PC-3 (cell line): ENCODE measurements at regions of chr6 and their contacts with region 1.

Region 1: DNA sequence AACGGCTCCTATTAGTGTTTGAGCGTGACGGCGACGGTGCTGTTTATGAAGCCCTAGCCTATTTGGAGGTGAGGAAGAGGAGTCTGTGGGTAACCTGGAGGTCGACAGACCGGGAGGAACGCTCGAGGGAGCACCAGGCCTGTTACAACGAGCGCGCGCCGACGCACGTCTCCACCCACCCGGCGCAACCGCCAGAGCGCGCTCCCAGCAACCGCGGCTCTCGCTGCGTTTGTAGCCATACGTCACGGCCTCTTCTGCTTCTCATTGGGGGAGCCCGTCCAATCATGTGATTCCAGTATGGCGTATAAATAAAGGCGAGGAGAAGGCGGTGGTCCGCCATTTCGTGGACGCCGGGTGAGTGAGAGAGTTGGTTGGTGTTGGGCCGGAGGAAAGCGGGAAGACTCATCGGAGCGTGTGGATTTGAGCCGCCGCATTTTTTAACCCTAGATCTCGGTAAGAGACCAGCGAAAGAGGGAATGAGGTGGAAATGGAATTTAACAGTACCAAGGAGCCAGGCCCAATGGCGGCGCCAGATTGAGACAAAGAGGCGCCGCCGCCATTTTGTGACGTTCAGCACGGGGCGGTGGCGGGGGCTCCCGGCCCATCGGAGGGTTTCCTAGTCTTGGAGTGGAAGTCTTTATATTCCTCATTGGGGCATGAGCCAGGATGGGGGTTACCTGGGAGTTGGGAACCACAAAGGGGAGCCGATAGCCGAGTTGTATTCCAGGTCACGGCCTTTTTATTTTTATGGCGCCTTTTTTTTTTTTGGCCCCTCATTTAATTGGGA is at the start of gene SRSF3:
- DNase-seq: peak; percentile 98
- ATAC-seq: peak; percentile 92
- H3K4me3 ChIP-seq: peak within 1 kb of the TSS; percentile 88
- H3K27ac ChIP-seq: peak within 1 kb of the TSS; percentile 75
- H3K4me1 ChIP-seq: peaks cover 39% of the 10 kb centered on the region
- H3K27me3 ChIP-seq: no peaks in the 10 kb centered on the region
- CTCF ChIP-seq: no peak; the same call in 1 of the 2 replicates
- total RNA-seq, gene SRSF3: 206 and 297 TPM in 2 replicates

Region 2: DNA sequence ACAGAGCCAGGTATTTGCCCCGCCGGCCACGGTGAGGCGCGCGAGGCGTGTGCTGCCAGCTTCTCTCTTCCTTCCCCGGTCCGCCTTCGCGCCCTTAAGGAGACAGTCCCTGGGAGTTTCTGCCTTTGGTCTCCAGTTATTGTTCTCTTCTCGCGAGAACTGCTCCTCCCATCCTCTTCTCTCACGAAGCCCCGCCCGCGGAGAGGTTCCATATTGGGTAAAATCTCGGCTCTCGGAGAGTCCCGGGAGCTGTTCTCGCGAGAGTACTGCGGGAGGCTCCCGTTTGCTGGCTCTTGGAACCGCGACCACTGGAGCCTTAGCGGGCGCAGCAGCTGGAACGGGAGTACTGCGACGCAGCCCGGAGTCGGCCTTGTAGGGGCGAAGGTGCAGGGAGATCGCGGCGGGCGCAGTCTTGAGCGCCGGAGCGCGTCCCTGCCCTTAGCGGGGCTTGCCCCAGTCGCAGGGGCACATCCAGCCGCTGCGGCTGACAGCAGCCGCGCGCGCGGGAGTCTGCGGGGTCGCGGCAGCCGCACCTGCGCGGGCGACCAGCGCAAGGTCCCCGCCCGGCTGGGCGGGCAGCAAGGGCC is 566.6 kb before region 1 on chr6 and contains the start of gene MAPK14:
- CTCF ChIA-PET with region 1: no interaction called
- POLR2A ChIA-PET with region 1: no interaction called
- intact Hi-C with region 1: no loop called
- DNase-seq: peak; percentile 100
- ATAC-seq: peak; percentile 88
- H3K4me3 ChIP-seq: peak within 1 kb of the TSS; percentile 75
- H3K27ac ChIP-seq: peak within 1 kb of the TSS; percentile 52
- H3K4me1 ChIP-seq: peaks cover 15% of the 10 kb centered on the region; the same call in 1 of the 2 replicates
- H3K27me3 ChIP-seq: no peaks in the 10 kb centered on the region
- CTCF ChIP-seq: peak; percentile 85
- total RNA-seq, gene MAPK14: 53.7 and 56.8 TPM in 2 replicates

Region 3: DNA sequence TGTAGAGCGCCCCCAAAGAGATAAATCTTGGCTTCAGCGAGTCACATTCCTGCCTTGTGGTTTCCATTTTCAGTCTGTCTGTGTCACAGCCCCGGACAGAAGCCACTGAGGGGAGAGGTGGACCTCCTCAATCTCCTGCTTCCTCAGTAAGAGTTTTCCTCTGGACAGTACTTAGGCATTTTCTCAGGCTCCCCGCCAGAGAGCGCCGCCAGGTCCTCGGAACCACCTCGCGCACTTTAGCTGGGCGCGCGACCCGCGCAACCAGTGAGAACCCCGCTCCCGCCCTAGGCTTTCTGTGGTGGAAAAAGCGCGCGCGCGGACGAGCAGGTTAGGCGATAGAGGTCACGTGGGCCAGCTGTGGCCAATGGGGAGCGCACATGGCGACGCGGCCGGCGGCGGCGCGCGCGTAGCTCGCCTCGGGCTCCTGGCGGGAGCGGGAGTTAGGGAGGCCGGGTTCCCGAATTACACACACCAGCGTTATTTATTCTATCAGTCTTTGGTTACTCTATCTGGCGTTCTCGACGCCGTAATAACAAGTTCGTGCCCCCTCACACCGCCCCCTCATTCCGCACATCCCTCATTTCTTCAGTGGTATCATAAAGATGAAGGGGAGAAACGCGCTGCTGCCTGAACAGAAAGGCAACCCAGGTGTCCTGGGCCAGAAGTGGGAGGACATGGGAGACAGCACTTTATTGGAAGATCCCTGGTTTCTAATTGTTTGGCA is 171.0 kb before region 1 on chr6:
- CTCF ChIA-PET with region 1: no interaction called
- POLR2A ChIA-PET with region 1: no interaction called
- intact Hi-C with region 1: loop called (anchors 1 kb)
- DNase-seq: peak; percentile 99
- ATAC-seq: peak; percentile 87
- H3K4me3 ChIP-seq: peak overlapping the region; percentile 72
- H3K27ac ChIP-seq: peak overlapping the region; percentile 50
- H3K4me1 ChIP-seq: peaks cover 6% of the 10 kb centered on the region
- H3K27me3 ChIP-seq: no peaks in the 10 kb centered on the region
- CTCF ChIP-seq: peak; percentile 83

Region 4: DNA sequence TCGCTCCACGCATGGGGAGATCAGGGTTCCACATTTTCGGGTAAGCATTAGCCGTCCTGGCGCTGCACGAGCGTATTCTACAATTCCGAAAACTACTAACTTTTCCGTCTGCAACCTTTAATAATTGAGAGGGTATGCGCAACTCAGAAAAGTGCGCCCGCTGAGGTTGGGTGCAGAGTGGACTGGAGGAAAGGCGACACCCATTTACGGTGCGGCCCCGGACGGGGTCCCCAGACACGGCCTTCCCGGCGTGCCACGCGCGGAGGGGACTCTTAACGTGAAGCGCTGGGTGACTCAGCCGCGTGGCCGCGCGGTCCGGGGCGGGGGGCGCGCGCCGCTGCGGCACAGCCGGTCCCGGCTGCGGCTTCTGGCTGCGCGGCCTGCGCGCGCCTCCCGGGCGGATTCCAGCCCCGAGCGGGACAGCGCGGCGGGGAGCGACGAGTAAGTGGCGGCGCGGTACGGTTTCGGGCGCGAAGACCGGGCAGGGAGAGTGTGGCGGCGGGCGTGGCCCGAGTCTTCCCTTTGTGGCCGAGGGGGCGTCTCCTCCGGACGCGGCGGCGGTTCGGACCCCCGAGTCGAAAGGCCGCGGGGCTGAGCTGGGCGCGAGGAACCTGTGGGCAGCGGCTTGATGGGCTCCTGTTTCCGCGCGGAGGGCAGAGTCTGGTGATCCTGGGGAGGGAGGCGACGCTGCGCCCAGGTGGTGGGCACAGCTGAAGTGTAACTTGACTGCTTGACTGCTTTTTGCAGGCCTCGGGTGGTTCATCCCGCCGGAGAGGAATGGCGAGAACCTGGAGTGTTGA is 151.4 kb before region 1 on chr6 and contains the starts of genes KCTD20 and PXT1:
- CTCF ChIA-PET with region 1: no interaction called
- POLR2A ChIA-PET with region 1: no interaction called
- intact Hi-C with region 1: loop called (anchors 1 kb)
- DNase-seq: peak; percentile 91
- ATAC-seq: peak; percentile 73
- H3K4me3 ChIP-seq: peak within 1 kb of the TSS; percentile 97
- H3K27ac ChIP-seq: peak within 1 kb of the TSS; percentile 83
- H3K4me1 ChIP-seq: peaks cover 29% of the 10 kb centered on the region
- H3K27me3 ChIP-seq: no peaks in the 10 kb centered on the region
- CTCF ChIP-seq: no peak
- total RNA-seq, gene KCTD20: 20.8 and 26.5 TPM in 2 replicates
- total RNA-seq, gene PXT1: not detected in 2 replicates

Region 5: DNA sequence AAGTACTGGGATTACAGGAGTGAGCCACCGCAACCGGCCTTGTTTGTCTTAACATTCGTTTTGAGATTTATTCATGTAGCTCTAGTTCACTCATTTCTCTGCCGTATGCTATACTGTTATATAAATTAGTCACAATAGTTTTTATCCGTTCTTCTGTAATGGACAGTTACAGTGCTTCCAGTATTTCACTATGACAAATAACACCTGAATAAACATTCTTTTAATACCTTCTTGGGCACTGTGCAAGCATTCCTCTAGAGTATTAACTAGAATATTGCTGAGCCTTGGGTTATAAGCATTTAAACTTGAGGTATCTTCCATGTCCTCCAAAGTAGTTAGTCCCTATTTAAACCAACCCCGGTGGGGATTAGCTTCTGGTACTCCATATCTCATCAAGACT is 92.5 kb before region 1 on chr6:
- CTCF ChIA-PET with region 1: no interaction called
- POLR2A ChIA-PET with region 1: no interaction called
- intact Hi-C with region 1: loop called (anchors 2 kb)
- DNase-seq: peak; percentile 63
- ATAC-seq: peak; percentile 94
- H3K4me3 ChIP-seq: no peak overlapping the region
- H3K27ac ChIP-seq: peak overlapping the region; percentile 19; the same call in 1 of the 2 replicates
- H3K4me1 ChIP-seq: peaks cover 13% of the 10 kb centered on the region; the same call in 1 of the 2 replicates
- H3K27me3 ChIP-seq: no peaks in the 10 kb centered on the region
- CTCF ChIP-seq: no peak

Region 6: GRCh38 chr6:36526066-36526465 is 68.2 kb before region 1 on chr6:
- CTCF ChIA-PET with region 1: no interaction called
- POLR2A ChIA-PET with region 1: no interaction called
- intact Hi-C with region 1: no loop called
- DNase-seq: no peak
- ATAC-seq: no peak
- H3K4me3 ChIP-seq: no peak overlapping the region
- H3K27ac ChIP-seq: no peak overlapping the region
- H3K4me1 ChIP-seq: no peaks in the 10 kb centered on the region
- H3K27me3 ChIP-seq: no peaks in the 10 kb centered on the region
- CTCF ChIP-seq: no peak

Region 7: GRCh38 chr6:36546920-36547645 is 47.1 kb before region 1 on chr6 and contains the start of gene STK38:
- CTCF ChIA-PET with region 1: no interaction called
- POLR2A ChIA-PET with region 1: interaction called, 22 read pairs
- intact Hi-C with region 1: loop called (anchors 2 kb)
- DNase-seq: peak; percentile 89
- ATAC-seq: peak; percentile 91
- H3K4me3 ChIP-seq: peak within 1 kb of the TSS; percentile 94
- H3K27ac ChIP-seq: peak within 1 kb of the TSS; percentile 55
- H3K4me1 ChIP-seq: peaks cover 34% of the 10 kb centered on the region
- H3K27me3 ChIP-seq: no peaks in the 10 kb centered on the region
- CTCF ChIP-seq: peak; percentile 52
- total RNA-seq, gene STK38: 25.7 and 26.9 TPM in 2 replicates

Region 8: GRCh38 chr6:36576561-36576960 is 17.7 kb before region 1 on chr6:
- CTCF ChIA-PET with region 1: interaction called, 10 read pairs
- POLR2A ChIA-PET with region 1: no interaction called
- intact Hi-C with region 1: loop called (anchors 2 kb)
- DNase-seq: no peak
- ATAC-seq: no peak
- H3K4me3 ChIP-seq: no peak overlapping the region
- H3K27ac ChIP-seq: peak overlapping the region; percentile 37; the same call in 1 of the 2 replicates
- H3K4me1 ChIP-seq: peaks cover 29% of the 10 kb centered on the region
- H3K27me3 ChIP-seq: no peaks in the 10 kb centered on the region
- CTCF ChIP-seq: no peak

Region 9: DNA sequence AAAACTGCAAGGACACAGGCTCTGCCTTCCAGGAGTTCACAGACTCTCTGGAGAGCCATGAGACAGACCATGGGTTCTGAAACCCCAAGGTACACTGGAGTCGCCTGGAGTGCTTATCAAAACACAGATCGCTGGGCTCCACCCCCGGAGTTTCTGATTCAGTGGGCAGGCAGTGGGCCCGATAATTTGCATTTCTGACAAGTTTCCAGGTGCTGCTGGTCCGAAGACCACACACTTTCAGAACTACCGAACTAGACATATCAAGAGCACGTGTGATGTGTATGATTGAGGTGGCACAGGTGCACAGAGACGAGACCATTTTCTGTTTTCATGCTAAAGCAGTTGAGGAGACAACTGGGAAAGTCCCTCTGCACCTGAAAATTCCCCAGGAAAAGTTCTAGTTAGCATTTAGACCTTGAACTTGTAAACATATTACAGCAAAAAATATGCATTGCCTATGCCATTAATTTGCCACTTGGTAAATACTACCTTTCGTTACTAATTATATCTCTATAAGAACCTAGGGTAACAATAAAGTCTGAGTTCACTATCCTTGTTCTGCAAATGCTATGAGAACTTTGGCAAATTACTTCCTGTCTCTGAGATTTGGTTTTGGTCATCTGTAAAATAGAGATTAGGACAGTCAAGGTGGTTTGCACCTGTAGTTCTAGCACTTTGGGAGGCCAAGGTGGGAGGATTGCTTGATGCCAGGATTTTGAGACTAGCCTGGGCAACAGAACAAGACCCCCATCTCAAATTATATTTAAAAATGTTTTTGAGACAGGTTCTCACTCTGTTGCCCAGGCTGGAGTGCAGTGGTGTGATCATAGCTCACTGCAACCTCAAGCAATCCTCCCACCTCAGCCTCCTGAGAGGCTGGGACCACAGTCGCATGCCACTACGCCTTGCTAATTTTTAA is 561.4 kb after region 1 on chr6:
- CTCF ChIA-PET with region 1: no interaction called
- POLR2A ChIA-PET with region 1: no interaction called
- intact Hi-C with region 1: no loop called
- DNase-seq: no peak
- ATAC-seq: no peak
- H3K4me3 ChIP-seq: no peak overlapping the region
- H3K27ac ChIP-seq: no peak overlapping the region
- H3K4me1 ChIP-seq: peaks cover 3% of the 10 kb centered on the region
- H3K27me3 ChIP-seq: no peaks in the 10 kb centered on the region
- CTCF ChIP-seq: no peak